ENCODE measurements at regions of chr2 and their contacts with region 1.

Region 1: GRCh38 chr2:174688079-174688478 is 76.2 kb downstream of the CHRNA1 start:
- DNase-seq: no peak
- H3K4me3 Mint-ChIP-seq: no peak overlapping the region
- H3K27ac Mint-ChIP-seq: no peak overlapping the region
- H3K4me1 Mint-ChIP-seq: peaks cover 36% of the 10 kb centered on the region
- H3K27me3 Mint-ChIP-seq: no peaks in the 10 kb centered on the region

Region 2: GRCh38 chr2:174577967-174578589 is 110.0 kb before region 1 on chr2:
- CTCF ChIA-PET with region 1: interaction called, 85 read pairs
- POLR2A ChIA-PET with region 1: interaction called, 4 read pairs
- DNase-seq: peak; percentile 57
- H3K4me3 Mint-ChIP-seq: no peak overlapping the region
- H3K27ac Mint-ChIP-seq: no peak overlapping the region
- H3K4me1 Mint-ChIP-seq: peaks cover 78% of the 10 kb centered on the region
- H3K27me3 Mint-ChIP-seq: no peaks in the 10 kb centered on the region

Region 3: DNA sequence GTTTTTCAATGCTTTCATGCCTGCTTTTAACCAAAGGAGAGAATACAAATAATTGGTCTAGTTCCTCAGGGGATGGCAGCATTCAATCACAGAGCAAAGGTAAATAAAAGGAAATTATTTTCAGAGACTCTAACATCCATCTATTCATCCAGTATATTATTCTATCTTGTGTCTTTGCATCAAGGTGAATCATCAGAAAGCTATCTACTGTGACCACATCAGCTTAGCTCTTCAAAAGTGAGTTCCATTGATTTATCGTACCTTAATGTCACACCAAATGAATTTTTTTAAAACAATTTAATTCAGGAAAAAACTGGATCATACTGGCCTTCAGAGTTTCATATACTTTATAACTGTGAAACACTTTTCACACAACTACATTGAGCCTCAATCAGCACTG is 251.0 kb after region 1 on chr2:
- CTCF ChIA-PET with region 1: no interaction called
- POLR2A ChIA-PET with region 1: no interaction called
- DNase-seq: no peak
- H3K4me3 Mint-ChIP-seq: no peak overlapping the region
- H3K27ac Mint-ChIP-seq: no peak overlapping the region
- H3K4me1 Mint-ChIP-seq: no peaks in the 10 kb centered on the region
- H3K27me3 Mint-ChIP-seq: no peaks in the 10 kb centered on the region

Measured in activated CD4-positive, alpha-beta memory T cell treated with anti-CD3 and anti-CD28 coated beads, Interleukin-2, amount 10 ng/mL, durations not matched to agents 7 days and 5 days (primary cell).